Activated T-helper 2 cell treated with anti-CD3 and anti-CD28 coated beads, Interferon-gamma antibody, Interleukin-2, Interleukin-4, amounts not matched to agents 10 μg/mL and 5 μg/mL and 100 μg/mL, durations not matched to agents 14 hours and 24 hours and 36 hours (primary cell): ENCODE measurements at regions of chr17 and their contacts with region 1.

Region 1: GRCh38 chr17:38349097-38349730 is 2.4 kb upstream of the SOCS7 start:
- DNase-seq: peak; percentile 77
- H3K4me3 Mint-ChIP-seq: no peak overlapping the region
- H3K27ac Mint-ChIP-seq: no peak overlapping the region
- H3K4me1 Mint-ChIP-seq: peaks cover 21% of the 10 kb centered on the region
- H3K27me3 Mint-ChIP-seq: no peaks in the 10 kb centered on the region

Region 2: GRCh38 chr17:38379438-38379837 is 30.2 kb after region 1 on chr17:
- intact Hi-C with region 1: no loop called
- DNase-seq: no peak
- H3K4me3 Mint-ChIP-seq: no peak overlapping the region
- H3K27ac Mint-ChIP-seq: no peak overlapping the region
- H3K4me1 Mint-ChIP-seq: peaks cover 1% of the 10 kb centered on the region
- H3K27me3 Mint-ChIP-seq: no peaks in the 10 kb centered on the region

Region 3: GRCh38 chr17:38415250-38416194 is 66.3 kb after region 1 on chr17:
- intact Hi-C with region 1: loop called (anchors 1 kb)
- DNase-seq: no peak
- H3K4me3 Mint-ChIP-seq: peak overlapping the region; percentile 62
- H3K27ac Mint-ChIP-seq: peak overlapping the region; percentile 79
- H3K4me1 Mint-ChIP-seq: peaks cover 10% of the 10 kb centered on the region
- H3K27me3 Mint-ChIP-seq: peaks cover 26% of the 10 kb centered on the region

Region 4: GRCh38 chr17:38485146-38485468 is 135.9 kb after region 1 on chr17:
- intact Hi-C with region 1: loop called (anchors 10 kb)
- DNase-seq: no peak
- H3K4me3 Mint-ChIP-seq: no peak overlapping the region
- H3K27ac Mint-ChIP-seq: no peak overlapping the region
- H3K4me1 Mint-ChIP-seq: peaks cover 5% of the 10 kb centered on the region
- H3K27me3 Mint-ChIP-seq: peaks cover 4% of the 10 kb centered on the region